ENCODE measurements at regions of chr11 and their contacts with region 1.

Region 1: GRCh38 chr11:111992206-111992855 is 32.9 kb upstream of the DLAT start:
- DNase-seq: no peak
- H3K4me3 ChIP-seq: no peak overlapping the region
- H3K27ac ChIP-seq: no peak overlapping the region
- H3K27me3 ChIP-seq: no peaks in the 10 kb centered on the region
- CTCF ChIP-seq: no peak

Region 2: DNA sequence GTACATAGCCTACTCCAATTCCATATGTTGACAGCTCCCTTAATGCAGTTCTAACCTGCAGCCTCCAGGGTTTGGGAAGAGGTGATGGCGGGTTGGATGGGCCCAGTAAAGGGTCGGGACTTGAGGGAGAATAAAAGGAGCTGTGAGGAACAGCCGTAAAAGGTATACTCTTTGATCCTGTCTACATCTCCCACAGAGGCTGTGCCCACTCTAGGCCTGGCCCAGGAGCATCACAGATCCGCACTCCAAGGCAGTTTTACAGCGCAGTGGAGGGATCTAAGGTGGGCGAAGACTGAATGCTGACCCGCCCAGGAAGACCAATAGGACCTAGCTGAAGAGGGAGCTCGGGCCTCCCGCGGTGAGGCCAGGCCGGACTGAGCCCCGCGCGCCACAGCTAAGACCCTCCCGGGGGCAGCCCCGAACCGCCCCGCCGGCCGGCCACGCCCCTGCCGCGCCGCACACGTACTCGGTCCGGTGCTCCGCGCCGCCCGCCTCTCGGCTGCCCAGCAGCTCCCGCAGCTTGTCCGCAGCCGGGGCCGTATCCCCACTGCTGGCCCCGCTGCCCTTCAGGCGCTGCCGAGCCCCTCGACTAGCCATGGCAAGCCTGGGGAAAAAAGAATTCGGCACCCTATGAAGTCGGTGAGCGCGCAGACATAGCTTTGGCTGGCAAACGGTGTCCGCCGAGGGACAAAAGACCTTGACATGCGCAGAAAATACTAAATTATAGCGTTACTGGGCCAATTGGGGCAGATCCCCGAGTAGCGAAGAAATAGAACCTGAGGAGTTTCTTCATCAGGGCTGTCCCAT is 121.2 kb before region 1 on chr11 and contains the start of gene ALG9:
- CTCF ChIA-PET with region 1: interaction called, 36 read pairs
- POLR2A ChIA-PET with region 1: no interaction called
- DNase-seq: peak; percentile 61
- H3K4me3 ChIP-seq: peak within 1 kb of the TSS; percentile 80
- H3K27ac ChIP-seq: peak within 1 kb of the TSS; percentile 42
- H3K27me3 ChIP-seq: no peaks in the 10 kb centered on the region
- CTCF ChIP-seq: peak; percentile 52
- polyA plus RNA-seq, gene ALG9: 31.7 and 40.0 TPM in 2 replicates

Region 3: DNA sequence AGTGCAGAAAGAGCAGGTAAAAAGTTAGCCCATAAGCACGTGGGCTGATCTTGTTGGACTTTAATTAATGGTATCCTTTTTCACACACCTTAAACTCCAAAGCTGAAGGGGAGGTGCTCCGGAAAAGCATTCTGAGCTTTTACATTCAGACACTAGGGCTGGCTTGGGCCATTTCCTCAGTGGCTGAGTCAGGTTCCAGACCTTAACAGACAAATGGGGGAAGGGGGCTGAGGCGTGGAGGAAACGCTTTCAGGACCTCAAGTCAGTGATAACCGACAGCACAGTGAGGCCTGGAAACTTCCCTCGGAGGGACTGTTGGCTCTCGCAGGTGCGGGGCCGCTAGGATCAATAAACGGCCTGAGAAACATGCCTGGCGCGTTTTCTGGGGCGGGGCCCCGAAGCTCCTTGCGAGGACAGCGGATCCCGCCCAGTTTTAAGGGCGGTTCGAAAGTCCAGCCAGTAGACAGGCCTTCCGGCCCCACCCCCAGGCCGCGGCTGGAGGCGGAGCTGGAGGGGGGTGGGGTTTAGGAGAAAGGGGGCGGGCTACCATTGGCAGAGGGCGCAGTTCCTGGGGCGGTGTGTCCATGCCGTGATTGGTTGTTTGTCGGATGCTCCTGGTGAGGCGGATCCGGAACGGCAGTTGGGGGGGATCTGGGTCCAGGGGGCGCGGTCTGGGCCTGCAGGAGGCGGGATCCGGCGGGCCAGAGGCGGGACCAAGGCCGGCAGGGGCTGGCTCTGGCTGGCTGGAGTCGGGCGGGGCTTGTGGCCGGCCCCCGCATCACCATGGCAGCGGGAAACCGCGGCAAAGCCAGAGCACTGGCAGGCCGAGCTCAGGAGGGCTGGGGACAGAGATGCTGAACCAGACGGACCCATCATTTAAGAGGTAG is 65.6 kb before region 1 on chr11:
- CTCF ChIA-PET with region 1: interaction called, 36 read pairs
- POLR2A ChIA-PET with region 1: interaction called, 6 read pairs
- DNase-seq: peak; percentile 95
- H3K4me3 ChIP-seq: peak overlapping the region; percentile 59
- H3K27ac ChIP-seq: peak overlapping the region; percentile 47
- H3K27me3 ChIP-seq: no peaks in the 10 kb centered on the region
- CTCF ChIP-seq: no peak

Region 4: GRCh38 chr11:111932611-111932950 is 59.8 kb before region 1 on chr11:
- CTCF ChIA-PET with region 1: interaction called, 52 read pairs
- POLR2A ChIA-PET with region 1: no interaction called
- DNase-seq: no peak
- H3K4me3 ChIP-seq: no peak overlapping the region
- H3K27ac ChIP-seq: no peak overlapping the region
- H3K27me3 ChIP-seq: no peaks in the 10 kb centered on the region
- CTCF ChIP-seq: no peak

Region 5: DNA sequence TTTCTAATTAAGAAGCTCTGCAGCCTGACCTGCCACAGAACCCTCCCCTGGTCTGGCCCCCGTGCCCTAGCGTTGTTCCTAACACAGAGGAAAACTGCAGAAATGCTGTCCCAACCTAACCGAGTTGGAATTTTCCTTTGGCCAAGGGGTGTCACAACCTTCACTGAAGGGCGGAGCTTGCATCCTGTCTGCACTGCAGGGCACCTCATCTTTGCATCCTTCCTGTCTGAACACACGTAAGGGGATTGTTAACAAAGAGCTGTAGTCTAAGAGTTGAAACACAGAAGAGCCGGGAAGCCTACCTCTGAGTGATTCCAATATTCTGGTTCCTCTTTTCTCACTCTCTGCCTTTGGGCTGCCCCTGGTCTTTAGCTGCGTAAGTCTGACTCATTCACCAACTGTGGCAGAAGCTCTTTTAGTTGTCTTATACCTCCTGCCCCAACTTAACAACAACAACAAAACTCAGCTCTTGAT is 53.6 kb before region 1 on chr11:
- CTCF ChIA-PET with region 1: interaction called, 52 read pairs
- POLR2A ChIA-PET with region 1: no interaction called
- DNase-seq: no peak
- H3K4me3 ChIP-seq: peak overlapping the region; percentile 46
- H3K27ac ChIP-seq: peak overlapping the region; percentile 43
- H3K27me3 ChIP-seq: no peaks in the 10 kb centered on the region
- CTCF ChIP-seq: no peak

Region 6: GRCh38 chr11:111982019-111982464 is 10.3 kb before region 1 on chr11:
- CTCF ChIA-PET with region 1: interaction called, 11 read pairs
- POLR2A ChIA-PET with region 1: interaction called, 4 read pairs
- DNase-seq: no peak
- H3K4me3 ChIP-seq: no peak overlapping the region
- H3K27ac ChIP-seq: no peak overlapping the region
- H3K27me3 ChIP-seq: no peaks in the 10 kb centered on the region
- CTCF ChIP-seq: peak; percentile 65

Region 7: DNA sequence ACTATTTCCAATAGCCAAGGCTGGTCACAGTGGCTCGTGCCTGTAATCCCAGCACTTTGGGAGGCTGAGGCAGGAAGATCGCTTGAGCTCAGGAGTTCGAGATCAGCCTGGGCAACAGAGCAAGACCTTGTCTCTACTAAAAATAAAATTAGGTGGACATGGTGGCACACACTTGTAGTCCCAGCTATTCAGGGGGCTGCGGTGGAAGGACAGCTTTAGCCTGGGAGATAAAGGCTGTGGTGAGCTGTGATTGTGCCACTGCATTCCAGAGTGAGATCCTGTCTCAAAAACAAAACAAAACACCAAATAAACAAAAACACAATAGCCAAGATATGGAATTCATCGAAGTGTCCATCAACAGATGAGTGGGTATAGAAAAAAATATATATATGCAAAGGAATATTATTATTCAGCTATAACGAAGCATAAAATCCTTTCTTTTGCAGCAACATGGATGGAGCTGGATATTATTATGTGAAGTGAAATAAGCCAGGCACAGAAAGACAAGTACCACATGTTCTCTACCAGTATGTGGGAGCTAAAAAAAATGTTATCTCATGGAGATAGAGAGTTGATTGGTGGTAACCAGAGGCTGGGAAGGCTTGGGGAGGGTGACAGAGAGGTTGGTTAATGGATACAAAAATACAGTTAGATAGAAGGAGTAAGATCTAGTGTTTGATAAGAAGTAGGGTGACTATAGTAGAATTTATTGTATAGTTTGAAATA is 10.3 kb after region 1 on chr11:
- CTCF ChIA-PET with region 1: interaction called, 12 read pairs
- POLR2A ChIA-PET with region 1: no interaction called
- DNase-seq: no peak
- H3K4me3 ChIP-seq: no peak overlapping the region
- H3K27ac ChIP-seq: no peak overlapping the region
- H3K27me3 ChIP-seq: no peaks in the 10 kb centered on the region
- CTCF ChIP-seq: no peak

Measured in AG04450 (cell line).